Naive thymus-derived CD8-positive, alpha-beta T cell (primary cell): ENCODE measurements at regions of chr14 and their contacts with region 1.

Region 1: GRCh38 chr14:24188251-24189058 is at the start of gene IPO4:
- DNase-seq: peak; percentile 85 to 98 (median 94)
- ATAC-seq: peak; percentile 90 to 97
- H3K4me3 Mint-ChIP-seq: peak within 1 kb of the TSS; percentile 80 to 95 (median 90)
- H3K27ac Mint-ChIP-seq: peak within 1 kb of the TSS; percentile 83 to 97 (median 94)
- H3K4me1 Mint-ChIP-seq: peaks cover 14 to 61% (median 44%) of the 10 kb centered on the region in 4 donors
- H3K27me3 Mint-ChIP-seq: peaks cover 0 to 2% (median 0%) of the 10 kb centered on the region in 5 donors
- polyA plus RNA-seq, gene IPO4: 20.2 to 27.5 (median 21.1) TPM

Region 2: DNA sequence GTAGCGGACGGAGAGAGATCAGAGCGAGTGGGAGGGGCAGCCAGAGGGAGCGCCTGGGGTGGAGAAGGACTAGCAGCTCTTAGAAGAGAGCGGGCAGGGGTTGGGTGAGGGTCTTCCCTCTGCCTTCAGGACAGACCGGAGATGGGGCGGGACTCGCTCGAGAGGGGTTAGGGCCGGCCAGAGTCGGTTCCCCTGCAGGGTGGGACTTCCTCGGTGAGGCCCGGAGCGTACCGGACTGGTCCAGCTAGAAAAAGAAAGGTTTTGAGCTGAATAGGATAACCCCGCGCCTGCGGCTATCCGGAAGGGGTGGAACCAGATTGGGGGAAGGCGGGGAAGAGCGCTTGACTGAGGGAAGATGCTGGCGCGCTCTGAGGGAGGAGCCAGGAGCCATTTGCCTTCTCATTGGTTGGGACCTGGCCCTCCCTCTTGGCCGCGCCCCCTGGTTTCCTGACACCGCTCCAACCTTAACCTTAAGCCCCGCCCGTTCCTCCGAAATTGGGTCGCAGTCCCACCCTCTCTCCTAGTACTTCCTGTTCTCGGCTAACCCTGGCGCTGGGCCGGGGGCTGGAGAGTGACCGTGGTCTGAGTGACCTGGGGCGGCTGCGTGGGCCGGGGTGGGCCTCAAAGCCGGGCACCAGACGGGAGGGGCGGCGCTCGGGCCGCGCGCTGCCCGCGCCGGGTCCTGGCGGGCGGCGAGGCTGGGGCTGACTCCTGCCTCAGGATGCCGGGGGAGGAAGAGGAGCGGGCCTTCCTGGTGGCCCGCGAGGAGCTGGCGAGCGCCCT is 41.3 kb before region 1 on chr14 and contains the start of gene RNF31:
- POLR2A ChIA-PET with region 1: interaction called, 14 read pairs
- DNase-seq: peak; percentile 91 to 98 (median 96)
- ATAC-seq: peak; percentile 87 to 90
- H3K4me3 Mint-ChIP-seq: peak within 1 kb of the TSS; percentile 94 to 100 (median 98)
- H3K27ac Mint-ChIP-seq: peak within 1 kb of the TSS; percentile 91 to 99 (median 96)
- H3K4me1 Mint-ChIP-seq: peaks cover 22 to 71% (median 69%) of the 10 kb centered on the region in 4 donors
- H3K27me3 Mint-ChIP-seq: no peaks in the 10 kb centered on the region
- polyA plus RNA-seq, gene RNF31: 34.1 to 45.3 (median 37.6) TPM

Region 3: DNA sequence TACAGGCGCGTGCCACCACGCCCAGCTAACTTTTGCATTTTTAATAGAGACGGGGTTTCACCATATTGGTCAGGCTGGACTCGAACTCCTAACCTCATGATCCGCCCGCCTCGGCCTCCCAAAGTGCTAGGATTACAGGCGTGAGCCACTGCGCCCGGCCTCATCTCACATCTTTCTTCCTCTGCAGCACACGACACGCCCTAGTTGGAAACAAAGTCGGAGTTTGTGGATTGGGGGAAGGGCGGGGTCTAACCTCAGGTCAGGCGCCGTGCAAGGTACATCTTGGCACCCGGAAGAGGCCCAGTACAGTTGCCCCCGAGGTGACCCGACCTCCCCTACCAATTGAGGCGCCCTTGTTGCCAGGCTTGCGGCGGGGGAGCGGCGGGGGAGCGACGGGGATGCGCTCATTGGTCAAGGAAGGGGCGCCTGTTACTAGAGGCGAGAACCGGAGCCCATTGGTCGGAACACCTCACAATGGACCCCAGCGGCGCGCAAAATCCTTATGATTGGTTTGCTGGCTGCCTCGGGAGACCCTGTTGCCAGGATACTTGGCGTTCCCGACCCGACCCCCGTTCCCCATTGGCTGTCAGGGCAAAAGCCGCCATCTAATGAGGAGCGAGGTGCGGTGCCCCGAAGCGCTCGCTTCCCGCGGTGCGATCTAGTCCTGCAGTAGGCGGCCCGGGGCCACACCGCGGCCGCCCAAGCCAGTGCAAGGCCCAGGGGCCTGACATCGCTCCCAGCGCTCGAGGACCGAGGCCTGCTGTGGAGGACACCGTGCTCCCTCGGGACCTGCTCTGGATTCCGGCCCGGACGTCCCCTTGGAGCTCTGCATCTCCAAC is 16.8 kb before region 1 on chr14 and contains the start of gene REC8:
- POLR2A ChIA-PET with region 1: interaction called, 12 read pairs
- DNase-seq: peak; percentile 61 to 92 (median 84)
- ATAC-seq: peak; percentile 91
- H3K4me3 Mint-ChIP-seq: peak within 1 kb of the TSS; percentile 86 to 97 (median 92)
- H3K27ac Mint-ChIP-seq: peak within 1 kb of the TSS; percentile 77 to 94 (median 92)
- H3K4me1 Mint-ChIP-seq: peaks cover 18 to 42% (median 38%) of the 10 kb centered on the region in 4 donors
- H3K27me3 Mint-ChIP-seq: no peaks in the 10 kb centered on the region
- polyA plus RNA-seq, gene REC8: 11.1 to 11.6 (median 11.2) TPM